CD14-positive monocyte (primary cell): ENCODE measurements at regions of chr2 and their contacts with region 1.

Region 1: DNA sequence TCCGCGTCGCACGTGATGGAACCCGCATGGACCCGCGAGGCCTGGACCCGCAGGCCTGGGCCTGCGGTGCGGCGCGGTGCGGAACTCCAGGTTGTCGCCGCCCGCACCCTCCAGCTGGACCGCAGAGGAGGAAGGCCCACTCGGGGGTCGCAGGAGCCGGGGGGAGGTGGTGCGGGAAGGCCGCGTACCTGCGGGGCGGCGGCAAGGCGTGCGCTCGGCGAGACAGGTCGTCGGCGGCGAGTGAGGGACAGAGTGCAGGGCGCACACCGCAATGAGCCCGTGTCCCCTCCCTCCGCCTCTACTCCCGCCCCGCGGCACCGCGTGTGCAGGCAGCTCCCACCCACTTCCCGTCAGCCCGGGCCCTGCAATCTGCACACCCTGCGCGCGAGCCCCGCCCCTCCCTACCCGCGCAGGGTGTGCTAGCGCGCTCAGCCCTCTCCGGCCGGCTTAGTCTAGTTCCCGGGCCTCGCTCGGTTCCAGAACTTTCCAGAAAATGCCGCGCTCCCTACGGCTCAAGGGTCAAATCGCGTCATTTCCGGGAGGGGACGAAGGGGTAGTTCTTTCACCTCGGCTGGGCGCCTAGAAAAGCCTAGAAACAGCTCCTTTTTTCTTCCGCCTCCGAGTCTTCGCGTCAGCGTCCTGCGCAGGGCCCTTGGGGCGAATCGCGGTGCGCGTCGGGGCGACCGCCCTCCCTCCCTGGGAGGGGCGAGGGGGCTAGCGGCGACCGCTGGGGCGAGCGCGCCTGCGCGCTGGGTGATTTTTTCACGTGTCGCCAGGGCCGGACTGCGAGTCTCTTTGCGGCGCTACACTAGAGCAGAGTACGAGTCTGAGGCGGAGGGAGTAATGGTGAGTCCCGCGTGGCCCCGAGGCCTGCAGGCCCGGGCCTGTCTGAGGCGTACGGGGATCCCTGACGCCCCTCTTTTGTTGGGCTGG is at the starts of genes HSPD1 and HSPE1:
- DNase-seq: peak; percentile 99
- H3K4me3 ChIP-seq: peak within 1 kb of the TSS; percentile 84 to 95 (median 91)
- H3K4me3 Mint-ChIP-seq: peak within 1 kb of the TSS; percentile 94 to 96
- H3K27ac ChIP-seq: peak within 1 kb of the TSS; percentile 91 to 97
- H3K27ac Mint-ChIP-seq: peak within 1 kb of the TSS; percentile 91 to 98 (median 94)
- H3K4me1 ChIP-seq: peaks cover 22 to 42% of the 10 kb centered on the region in 2 donors
- H3K4me1 Mint-ChIP-seq: peaks cover 42% of the 10 kb centered on the region
- H3K27me3 ChIP-seq: no peaks in the 10 kb centered on the region
- H3K27me3 Mint-ChIP-seq: no peaks in the 10 kb centered on the region
- CTCF ChIP-seq: no peak
- polyA plus RNA-seq, gene HSPD1: 42.7 to 62.1 (median 44.5) TPM
- polyA plus RNA-seq, gene HSPE1: 25.2 to 46.2 (median 44.9) TPM

Region 2: DNA sequence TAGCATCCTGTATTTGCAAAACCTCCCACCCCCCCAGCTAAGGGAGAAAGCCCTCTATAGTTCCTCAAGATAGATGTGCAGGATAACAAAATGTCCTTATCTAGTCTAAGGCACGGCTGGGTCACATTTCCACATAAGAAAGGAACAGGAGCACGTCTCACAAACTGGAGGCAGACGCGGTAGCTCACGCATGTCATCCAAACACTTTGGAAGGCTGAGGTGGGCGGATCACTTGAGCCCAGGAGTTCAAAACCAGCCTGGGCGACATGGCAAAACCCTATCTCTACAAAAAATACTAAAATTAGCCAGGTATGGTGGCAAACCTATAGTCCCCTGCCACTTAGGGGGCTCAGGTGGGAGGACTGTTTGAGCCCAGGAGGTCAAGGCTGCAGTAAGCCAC is 74.3 kb before region 1 on chr2:
- intact Hi-C with region 1: loop called in 1 of 2 experiments (anchors 10 kb)
- DNase-seq: no peak
- H3K4me3 ChIP-seq: no peak overlapping the region
- H3K4me3 Mint-ChIP-seq: no peak overlapping the region
- H3K27ac ChIP-seq: peak overlapping the region in 1 of 2 donors; percentile 12
- H3K27ac Mint-ChIP-seq: peak overlapping the region in 1 of 7 donors; percentile 71
- H3K4me1 ChIP-seq: no peaks in the 10 kb centered on the region
- H3K4me1 Mint-ChIP-seq: peaks cover 20% of the 10 kb centered on the region
- H3K27me3 ChIP-seq: no peaks in the 10 kb centered on the region
- H3K27me3 Mint-ChIP-seq: no peaks in the 10 kb centered on the region
- CTCF ChIP-seq: no peak

Region 3: GRCh38 chr2:197434541-197435513 is 65.0 kb before region 1 on chr2 and contains the start of gene SF3B1:
- intact Hi-C with region 1: loop called in 1 of 2 experiments (anchors 5 kb)
- DNase-seq: peak; percentile 99 to 100 (median 99)
- H3K4me3 ChIP-seq: peak within 1 kb of the TSS; percentile 91 to 96 (median 91)
- H3K4me3 Mint-ChIP-seq: peak within 1 kb of the TSS; percentile 95 to 99
- H3K27ac ChIP-seq: peak within 1 kb of the TSS; percentile 96 to 99
- H3K27ac Mint-ChIP-seq: peak within 1 kb of the TSS; percentile 100
- H3K4me1 ChIP-seq: peaks cover 40 to 43% of the 10 kb centered on the region in 2 donors
- H3K4me1 Mint-ChIP-seq: peaks cover 44% of the 10 kb centered on the region
- H3K27me3 ChIP-seq: no peaks in the 10 kb centered on the region
- H3K27me3 Mint-ChIP-seq: no peaks in the 10 kb centered on the region
- CTCF ChIP-seq: no peak
- polyA plus RNA-seq, gene SF3B1: 105 to 494 (median 152) TPM

Region 4: DNA sequence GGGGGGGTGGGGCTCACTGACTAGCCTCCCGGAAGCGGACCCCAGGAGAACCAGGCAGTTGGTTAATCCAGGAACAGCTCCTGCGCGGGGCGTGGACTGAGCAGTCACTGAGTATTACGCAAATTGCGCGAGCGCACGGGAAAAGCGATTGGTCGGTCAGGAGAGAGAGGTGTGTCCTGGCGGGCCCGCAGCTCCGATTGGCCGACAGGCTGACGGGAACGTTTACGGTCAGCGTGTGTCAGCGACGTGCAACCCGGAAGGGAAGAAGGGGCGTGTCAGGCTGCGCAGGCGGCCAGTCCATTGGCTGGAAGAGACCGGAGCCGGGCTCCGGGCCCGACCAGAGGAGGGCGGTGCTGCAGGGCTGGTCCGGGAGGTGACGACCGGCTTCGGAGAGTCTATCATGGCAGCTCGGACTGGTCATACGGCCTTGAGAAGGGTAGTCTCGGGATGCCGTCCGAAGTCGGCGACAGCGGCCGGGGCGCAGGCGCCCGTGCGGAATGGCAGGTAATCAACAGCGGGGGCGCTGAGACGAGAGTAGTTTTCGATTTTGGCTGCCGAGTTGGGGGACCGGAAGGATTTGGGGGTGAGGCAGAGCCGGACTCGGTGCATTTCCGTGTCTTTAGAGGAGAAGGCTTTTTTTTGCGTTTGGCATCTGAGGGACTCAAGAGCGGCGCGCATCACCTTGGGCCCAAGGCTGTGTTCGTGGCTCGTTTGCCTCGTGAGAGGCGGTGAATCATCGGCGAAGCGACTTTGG is 46.5 kb before region 1 on chr2 and contains the start of gene COQ10B:
- intact Hi-C with region 1: loop called in 1 of 2 experiments (anchors 2 kb)
- DNase-seq: peak; percentile 100
- H3K4me3 ChIP-seq: peak within 1 kb of the TSS; percentile 67 to 90 (median 75)
- H3K4me3 Mint-ChIP-seq: peak within 1 kb of the TSS; percentile 97 to 98
- H3K27ac ChIP-seq: peak within 1 kb of the TSS; percentile 94 to 100
- H3K27ac Mint-ChIP-seq: peak within 1 kb of the TSS; percentile 100
- H3K4me1 ChIP-seq: peaks cover 14 to 25% of the 10 kb centered on the region in 2 donors
- H3K4me1 Mint-ChIP-seq: peaks cover 36% of the 10 kb centered on the region
- H3K27me3 ChIP-seq: no peaks in the 10 kb centered on the region
- H3K27me3 Mint-ChIP-seq: peaks cover 0 to 4% (median 0%) of the 10 kb centered on the region in 3 donors
- CTCF ChIP-seq: no peak
- polyA plus RNA-seq, gene COQ10B: 6.7 to 46.6 (median 38.3) TPM

Region 5: GRCh38 chr2:197515739-197516392 is 16.0 kb after region 1 on chr2 and contains the start of gene MOB4:
- intact Hi-C with region 1: loop called in 1 of 2 experiments (anchors 2 kb)
- DNase-seq: peak; percentile 95 to 97 (median 95)
- H3K4me3 ChIP-seq: peak within 1 kb of the TSS; percentile 78 to 88 (median 87)
- H3K4me3 Mint-ChIP-seq: peak within 1 kb of the TSS; percentile 88 to 96
- H3K27ac ChIP-seq: peak within 1 kb of the TSS; percentile 94 to 95
- H3K27ac Mint-ChIP-seq: peak within 1 kb of the TSS; percentile 92 to 98 (median 96)
- H3K4me1 ChIP-seq: peaks cover 15 to 27% of the 10 kb centered on the region in 2 donors
- H3K4me1 Mint-ChIP-seq: peaks cover 22% of the 10 kb centered on the region
- H3K27me3 ChIP-seq: no peaks in the 10 kb centered on the region
- H3K27me3 Mint-ChIP-seq: no peaks in the 10 kb centered on the region
- CTCF ChIP-seq: no peak
- polyA plus RNA-seq, gene MOB4: 14.8 to 32.4 (median 30.4) TPM